ENCODE measurements at regions of chr20 and their contacts with region 1.

Region 1: GRCh38 chr20:956330-956951 is 40.3 kb upstream of the ANGPT4 start:
- DNase-seq: peak; percentile 86
- H3K4me3 ChIP-seq: no peak overlapping the region
- H3K27ac ChIP-seq: no peak overlapping the region
- H3K4me1 ChIP-seq: no peaks in the 10 kb centered on the region
- H3K27me3 ChIP-seq: no peaks in the 10 kb centered on the region
- CTCF ChIP-seq: peak; percentile 94 to 99 (median 97)
- POLR2A ChIP-seq: no peak

Region 2: GRCh38 chr20:675453-676314 is 280.8 kb before region 1 on chr20 and contains the start of gene SCRT2:
- intact Hi-C with region 1: loop called (anchors 5 kb)
- DNase-seq: peak; percentile 82
- H3K4me3 ChIP-seq: peak within 1 kb of the TSS in 1 of 2 donors; percentile 17
- H3K27ac ChIP-seq: no peak within 1 kb of the TSS
- H3K4me1 ChIP-seq: peaks cover 9% of the 10 kb centered on the region
- H3K27me3 ChIP-seq: no peaks in the 10 kb centered on the region
- CTCF ChIP-seq: no peak
- POLR2A ChIP-seq: no peak
- total RNA-seq, gene SCRT2: 0.19 to 0.39 TPM

Region 3: GRCh38 chr20:815914-816606 is 140.4 kb before region 1 on chr20:
- intact Hi-C with region 1: loop called (anchors 2 kb)
- DNase-seq: peak; percentile 61
- H3K4me3 ChIP-seq: no peak overlapping the region
- H3K27ac ChIP-seq: no peak overlapping the region
- H3K4me1 ChIP-seq: peaks cover 7% of the 10 kb centered on the region
- H3K27me3 ChIP-seq: no peaks in the 10 kb centered on the region
- CTCF ChIP-seq: peak; percentile 94 to 99 (median 96)
- POLR2A ChIP-seq: no peak

Region 4: GRCh38 chr20:884983-885952 is 71.2 kb before region 1 on chr20:
- intact Hi-C with region 1: loop called (anchors 10 kb)
- DNase-seq: peak; percentile 83
- H3K4me3 ChIP-seq: peak overlapping the region in 1 of 2 donors; percentile 23
- H3K27ac ChIP-seq: no peak overlapping the region
- H3K4me1 ChIP-seq: peaks cover 13% of the 10 kb centered on the region
- H3K27me3 ChIP-seq: no peaks in the 10 kb centered on the region
- CTCF ChIP-seq: peak in 1 of 3 experiments; percentile 22
- POLR2A ChIP-seq: no peak